ENCODE measurements at regions of chr11 and their contacts with region 1.

Region 1: GRCh38 chr11:9210922-9211320 is 54.2 kb downstream of the DENND5A start:
- DNase-seq: peak; percentile 73
- H3K4me3 Mint-ChIP-seq: no peak overlapping the region
- H3K27ac Mint-ChIP-seq: peak overlapping the region; percentile 82
- H3K4me1 Mint-ChIP-seq: peaks cover 68% of the 10 kb centered on the region
- H3K27me3 Mint-ChIP-seq: no peaks in the 10 kb centered on the region

Region 2: GRCh38 chr11:8807544-8808225 is 403.2 kb before region 1 on chr11:
- CTCF ChIA-PET with region 1: no interaction called
- intact Hi-C with region 1: no loop called
- DNase-seq: no peak
- H3K4me3 Mint-ChIP-seq: no peak overlapping the region
- H3K27ac Mint-ChIP-seq: no peak overlapping the region
- H3K4me1 Mint-ChIP-seq: peaks cover 7% of the 10 kb centered on the region
- H3K27me3 Mint-ChIP-seq: peaks cover 14% of the 10 kb centered on the region

Region 3: GRCh38 chr11:9003573-9004309 is 207.2 kb before region 1 on chr11 and contains the start of gene NRIP3:
- CTCF ChIA-PET with region 1: no interaction called
- intact Hi-C with region 1: loop called (anchors 2 kb)
- DNase-seq: peak; percentile 67
- H3K4me3 Mint-ChIP-seq: peak within 1 kb of the TSS; percentile 68
- H3K27ac Mint-ChIP-seq: no peak within 1 kb of the TSS
- H3K4me1 Mint-ChIP-seq: peaks cover 24% of the 10 kb centered on the region
- H3K27me3 Mint-ChIP-seq: peaks cover 33% of the 10 kb centered on the region
- total RNA-seq, gene NRIP3: 3.0 to 3.5 TPM

Region 4: GRCh38 chr11:9158898-9159391 is 52.0 kb before region 1 on chr11:
- CTCF ChIA-PET with region 1: interaction called, 4 read pairs
- intact Hi-C with region 1: loop called (anchors 2 kb)
- DNase-seq: no peak
- H3K4me3 Mint-ChIP-seq: no peak overlapping the region
- H3K27ac Mint-ChIP-seq: peak overlapping the region; percentile 84
- H3K4me1 Mint-ChIP-seq: peaks cover 29% of the 10 kb centered on the region
- H3K27me3 Mint-ChIP-seq: no peaks in the 10 kb centered on the region

Region 5: DNA sequence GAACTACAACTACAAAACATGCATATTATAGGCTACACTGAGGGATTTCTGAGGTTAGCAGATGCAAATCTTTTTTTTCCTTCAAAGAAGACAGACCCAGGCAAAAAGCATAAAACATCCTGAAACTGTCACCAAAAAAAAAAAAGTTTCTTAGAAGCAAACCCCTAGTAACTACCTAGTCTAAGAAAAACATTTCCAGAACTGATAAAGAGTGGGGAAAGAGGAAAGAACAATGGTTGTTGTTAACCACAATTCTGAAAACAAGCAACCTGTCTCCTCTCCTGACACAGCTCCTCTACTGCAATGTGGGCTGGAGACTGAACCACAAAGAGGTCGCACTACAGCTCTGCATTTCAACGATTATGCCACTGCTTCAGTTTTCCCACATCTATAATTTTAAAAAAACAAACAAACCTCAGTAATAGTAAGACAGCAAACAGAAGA is 39.2 kb after region 1 on chr11:
- CTCF ChIA-PET with region 1: interaction called, 3 read pairs
- intact Hi-C with region 1: loop called (anchors 1 kb)
- DNase-seq: peak; percentile 52
- H3K4me3 Mint-ChIP-seq: no peak overlapping the region
- H3K27ac Mint-ChIP-seq: peak overlapping the region; percentile 56
- H3K4me1 Mint-ChIP-seq: peaks cover 70% of the 10 kb centered on the region
- H3K27me3 Mint-ChIP-seq: no peaks in the 10 kb centered on the region

Region 6: DNA sequence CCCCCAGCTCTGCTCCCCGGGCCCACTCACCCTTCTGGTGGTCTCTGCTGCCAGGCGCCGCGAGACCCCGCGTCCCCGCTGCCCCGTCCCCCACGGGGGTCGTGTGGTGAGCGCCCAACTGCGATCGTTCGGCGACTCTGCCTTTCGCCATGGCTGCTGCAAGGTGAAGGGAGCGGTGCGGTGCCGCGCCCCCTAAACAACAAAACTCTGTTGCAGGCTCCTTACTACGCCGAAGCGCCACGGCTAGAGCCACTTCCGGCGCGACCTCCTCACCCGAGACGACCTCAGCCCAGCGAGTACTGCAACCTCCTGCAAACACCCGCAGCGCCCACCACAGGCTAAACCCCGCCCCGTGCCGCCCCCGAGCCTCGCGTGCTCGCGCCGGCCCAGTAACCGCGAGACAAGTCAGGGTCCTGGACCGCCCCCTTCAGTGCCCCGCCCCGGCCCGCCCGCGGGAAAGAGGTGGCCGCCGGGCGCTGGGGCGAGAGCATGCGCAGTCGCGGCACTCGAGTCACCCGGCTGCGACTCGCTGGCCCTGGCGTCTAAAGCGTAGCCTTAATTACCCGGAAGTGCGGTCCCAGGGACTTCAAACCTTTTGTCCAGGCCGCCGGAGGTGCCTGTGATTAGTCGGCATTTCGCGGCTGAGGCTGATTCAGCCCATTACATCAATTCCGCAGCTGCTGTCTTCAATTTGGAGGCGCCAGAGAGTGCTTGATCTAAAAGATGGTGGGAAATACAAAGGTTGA is 103.5 kb after region 1 on chr11 and contains the start of gene TMEM41B:
- CTCF ChIA-PET with region 1: no interaction called
- intact Hi-C with region 1: loop called (anchors 1 kb)
- DNase-seq: peak; percentile 99
- H3K4me3 Mint-ChIP-seq: peak within 1 kb of the TSS; percentile 99
- H3K27ac Mint-ChIP-seq: peak within 1 kb of the TSS; percentile 92
- H3K4me1 Mint-ChIP-seq: peaks cover 37% of the 10 kb centered on the region
- H3K27me3 Mint-ChIP-seq: peaks cover 13% of the 10 kb centered on the region
- total RNA-seq, gene TMEM41B: 27.8 to 30.5 TPM

Region 7: GRCh38 chr11:9363954-9364912 is 153.3 kb after region 1 on chr11:
- CTCF ChIA-PET with region 1: no interaction called
- intact Hi-C with region 1: loop called (anchors 1 kb)
- DNase-seq: peak; percentile 91
- H3K4me3 Mint-ChIP-seq: peak overlapping the region; percentile 66
- H3K27ac Mint-ChIP-seq: peak overlapping the region; percentile 73
- H3K4me1 Mint-ChIP-seq: peaks cover 35% of the 10 kb centered on the region
- H3K27me3 Mint-ChIP-seq: no peaks in the 10 kb centered on the region

Measured in activated naive CD4-positive, alpha-beta T cell treated with anti-CD3 and anti-CD28 coated beads for 36 hours (primary cell).